BJ (cell line): ENCODE measurements at regions of chr22 and their contacts with region 1.

Region 1: DNA sequence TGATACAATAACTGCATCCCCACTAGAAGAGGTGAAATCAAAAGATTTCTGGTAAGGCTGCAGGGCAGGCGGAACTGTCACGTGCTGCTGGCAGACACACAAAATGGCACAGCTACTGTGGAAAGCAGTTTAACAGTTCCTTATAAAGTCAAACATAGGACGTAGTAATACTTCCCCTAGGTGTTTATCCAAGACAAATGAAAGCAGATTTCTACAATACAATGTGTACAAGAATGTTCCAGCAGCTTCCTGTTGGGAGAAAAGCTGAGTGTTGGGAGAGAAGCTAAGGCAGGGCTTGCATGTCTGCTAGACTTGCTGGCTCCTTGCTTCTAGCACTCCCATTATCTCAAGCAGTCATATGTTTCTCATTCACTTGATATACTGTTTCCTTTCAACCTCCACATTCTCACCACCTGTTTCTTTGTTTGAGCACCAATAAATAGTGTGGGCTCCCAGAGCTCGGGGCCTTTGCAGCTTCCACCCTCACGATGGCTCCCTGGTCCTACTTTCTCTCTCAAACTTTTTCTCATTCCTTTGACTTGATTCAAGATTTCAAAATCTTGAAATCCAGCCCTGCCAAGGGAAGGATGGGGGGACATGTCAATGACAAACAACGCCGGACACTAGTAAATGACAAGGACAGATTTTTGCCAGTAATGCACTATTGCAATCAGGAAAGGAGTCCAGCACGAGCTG is 21.2 kb upstream of the IL17RA start:
- DNase-seq: no peak
- H3K4me3 ChIP-seq: no peak overlapping the region
- H3K27me3 ChIP-seq: no peaks in the 10 kb centered on the region
- CTCF ChIP-seq: no peak

Region 2: DNA sequence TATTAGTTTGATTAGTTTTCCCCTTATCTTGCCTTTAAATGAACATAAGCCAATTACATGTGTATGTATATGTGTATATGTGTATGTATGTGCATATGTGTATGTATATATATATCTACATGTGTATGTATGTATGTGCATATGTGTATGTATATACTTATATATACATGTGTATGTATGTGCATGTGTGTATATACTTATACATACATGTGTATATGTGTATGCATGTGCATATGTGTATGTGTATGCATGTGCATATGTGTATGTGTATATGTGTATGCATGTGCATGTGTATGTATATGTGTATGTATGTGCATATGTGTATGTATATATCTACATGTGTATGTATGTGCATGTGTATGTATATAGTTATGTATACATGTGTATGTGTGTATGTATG is 405.5 kb before region 1 on chr22:
- CTCF ChIA-PET with region 1: no interaction called
- POLR2A ChIA-PET with region 1: no interaction called
- DNase-seq: no peak
- H3K4me3 ChIP-seq: no peak overlapping the region
- H3K27me3 ChIP-seq: no peaks in the 10 kb centered on the region
- CTCF ChIP-seq: no peak

Region 3: GRCh38 chr22:17077255-17077654 is 13.7 kb after region 1 on chr22:
- CTCF ChIA-PET with region 1: interaction called, 13 read pairs
- POLR2A ChIA-PET with region 1: no interaction called
- DNase-seq: peak; percentile 58
- H3K4me3 ChIP-seq: no peak overlapping the region
- H3K27me3 ChIP-seq: no peaks in the 10 kb centered on the region
- CTCF ChIP-seq: no peak